A673 (cell line): ENCODE measurements at regions of chr2 and their contacts with region 1.

Region 1: DNA sequence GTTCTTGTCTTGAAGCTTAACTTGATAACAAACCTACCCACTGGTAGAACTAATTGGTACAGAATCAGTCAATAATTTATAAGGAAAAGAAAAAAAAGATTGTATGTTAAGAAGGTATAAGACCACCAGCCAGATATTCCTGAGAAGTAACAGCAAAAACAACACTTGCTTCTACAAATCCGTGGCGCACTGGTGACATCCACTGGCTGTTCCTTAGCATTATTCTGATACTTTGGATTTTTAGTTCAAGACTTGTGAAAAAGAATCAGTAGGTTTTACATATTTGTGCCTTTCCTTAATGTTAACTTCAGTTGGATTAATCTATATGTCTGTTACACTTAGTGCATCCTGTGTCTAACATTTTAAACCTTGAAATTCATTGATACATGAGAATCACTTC is 141.8 kb downstream of the GRB14 start:
- DNase-seq: peak; percentile 38
- H3K4me3 ChIP-seq: no peak overlapping the region
- H3K27ac ChIP-seq: no peak overlapping the region
- H3K4me1 ChIP-seq: no peaks in the 10 kb centered on the region
- H3K27me3 ChIP-seq: peaks cover 25% of the 10 kb centered on the region
- CTCF ChIP-seq: peak; percentile 49

Region 2: GRCh38 chr2:163175294-163175693 is 1304.2 kb before region 1 on chr2:
- CTCF ChIA-PET with region 1: no interaction called
- POLR2A ChIA-PET with region 1: no interaction called
- intact Hi-C with region 1: loop called (anchors 5 kb)
- DNase-seq: no peak
- H3K4me3 ChIP-seq: no peak overlapping the region
- H3K27ac ChIP-seq: no peak overlapping the region
- H3K4me1 ChIP-seq: no peaks in the 10 kb centered on the region
- H3K27me3 ChIP-seq: no peaks in the 10 kb centered on the region
- CTCF ChIP-seq: no peak

Region 3: DNA sequence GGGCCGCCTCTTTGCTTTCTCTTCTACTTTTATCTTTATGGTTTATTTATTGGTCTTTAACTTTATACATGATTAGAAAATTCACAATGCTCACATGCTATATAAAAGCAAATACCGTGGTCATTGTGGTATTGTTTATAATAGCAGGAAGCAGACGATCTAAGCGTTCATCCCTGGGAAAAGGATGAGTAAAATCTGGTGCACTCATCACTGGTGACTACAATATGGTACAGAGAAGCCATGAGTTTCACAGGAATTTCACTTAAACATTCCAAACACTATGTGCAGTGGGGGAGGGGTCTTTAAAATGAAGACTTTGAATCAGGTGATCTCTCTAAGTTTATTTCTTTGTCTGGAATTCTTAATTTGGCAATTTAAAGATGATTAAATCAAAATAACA is 626.5 kb after region 1 on chr2:
- CTCF ChIA-PET with region 1: no interaction called
- POLR2A ChIA-PET with region 1: no interaction called
- intact Hi-C with region 1: no loop called
- DNase-seq: no peak
- H3K4me3 ChIP-seq: no peak overlapping the region
- H3K27ac ChIP-seq: no peak overlapping the region
- H3K4me1 ChIP-seq: no peaks in the 10 kb centered on the region
- H3K27me3 ChIP-seq: no peaks in the 10 kb centered on the region
- CTCF ChIP-seq: no peak